Activated CD4-positive, alpha-beta T cell treated with anti-CD3 and anti-CD28 coated beads, Interleukin-2, amount 10 ng/mL, durations not matched to agents 24 days and 14 days (primary cell): ENCODE measurements at regions of chr7 and their contacts with region 1.

Region 1: DNA sequence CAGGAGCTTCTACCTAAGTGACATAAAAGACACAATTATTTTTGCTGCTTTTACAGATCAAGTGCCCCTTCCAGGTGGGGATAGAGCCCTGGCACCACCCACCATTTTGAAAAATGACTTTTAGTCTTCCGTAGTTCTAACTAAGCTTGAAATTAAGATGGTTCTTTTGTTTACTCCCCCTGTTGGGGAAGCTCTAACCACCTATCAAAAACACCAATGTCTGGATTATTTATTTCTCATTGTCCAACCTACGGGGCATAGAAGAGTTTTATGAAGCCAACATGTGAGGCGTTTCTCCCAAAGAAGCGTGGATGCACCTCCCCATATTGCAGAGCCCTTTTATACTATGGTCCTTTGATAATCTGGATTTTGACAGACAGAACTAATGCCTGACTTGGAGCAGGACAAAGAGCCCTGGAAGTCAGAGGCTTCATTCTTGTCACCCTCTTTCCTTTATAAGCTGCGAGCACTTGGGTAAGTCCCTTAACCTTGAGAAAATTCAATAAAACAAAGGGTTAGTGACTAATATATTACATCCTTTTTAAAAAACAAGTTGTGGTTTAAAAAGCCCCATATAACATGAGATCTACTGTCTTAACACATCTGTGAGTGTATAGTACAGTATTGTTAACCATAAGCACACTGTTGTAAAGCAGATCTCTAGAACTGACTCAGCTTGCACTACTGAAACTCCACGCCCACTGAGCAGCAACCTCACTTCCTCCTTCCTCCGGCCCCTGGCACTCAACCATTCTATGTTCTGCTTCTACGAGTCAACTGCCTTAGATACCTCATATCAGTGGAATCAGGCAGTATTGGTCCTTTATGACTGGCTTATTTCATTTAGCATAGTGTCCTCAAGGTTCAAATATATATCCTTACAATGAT is 67.5 kb downstream of the ATXN7L1 start:
- DNase-seq: peak; percentile 93
- H3K4me3 Mint-ChIP-seq: peak overlapping the region; percentile 71
- H3K27ac Mint-ChIP-seq: peak overlapping the region; percentile 92
- H3K4me1 Mint-ChIP-seq: peaks cover 75% of the 10 kb centered on the region
- H3K27me3 Mint-ChIP-seq: peaks cover 2% of the 10 kb centered on the region

Region 2: DNA sequence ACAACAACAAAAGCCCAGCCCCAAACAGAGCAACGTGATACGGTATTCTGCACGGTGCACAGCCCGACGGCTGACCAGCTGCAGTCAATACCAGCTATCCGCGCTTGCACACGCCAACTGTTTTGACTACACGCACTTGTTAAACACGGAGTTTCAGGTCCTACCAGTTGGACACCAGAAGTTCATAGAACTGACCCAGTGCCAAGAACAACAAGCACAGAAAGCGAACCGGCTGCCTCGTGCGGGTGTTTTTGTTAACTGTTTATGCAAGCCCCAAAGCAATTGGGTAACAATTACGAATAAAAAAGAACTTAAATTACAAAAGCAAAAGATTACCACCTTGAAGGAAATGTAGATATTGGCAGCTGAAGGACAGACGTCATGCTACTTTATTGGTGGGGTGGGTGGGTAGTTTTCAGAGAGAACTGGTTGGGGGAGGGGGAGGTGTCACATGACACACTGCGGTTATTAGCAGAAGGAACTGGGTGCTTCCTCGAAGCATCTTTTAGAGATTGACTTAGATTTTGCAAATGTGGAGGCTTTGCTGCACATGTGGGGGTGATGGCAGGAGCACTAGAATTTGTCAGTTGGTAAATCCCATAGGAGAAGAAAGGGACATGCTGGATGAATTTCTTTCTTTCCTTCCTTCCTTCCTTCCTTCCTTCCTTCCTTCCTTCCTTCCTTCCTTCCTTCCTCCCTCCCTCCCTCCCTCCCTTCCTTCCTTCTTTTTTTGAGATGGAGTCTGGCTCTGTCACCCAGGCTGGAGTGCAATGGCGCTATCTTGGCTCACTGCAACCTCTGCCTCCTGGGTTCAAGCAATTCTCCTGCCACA is 117.0 kb before region 1 on chr7:
- intact Hi-C with region 1: loop called (anchors 1 kb)
- DNase-seq: peak; percentile 82
- H3K4me3 Mint-ChIP-seq: peak overlapping the region; percentile 87
- H3K27ac Mint-ChIP-seq: peak overlapping the region; percentile 88
- H3K4me1 Mint-ChIP-seq: peaks cover 34% of the 10 kb centered on the region
- H3K27me3 Mint-ChIP-seq: no peaks in the 10 kb centered on the region

Region 3: DNA sequence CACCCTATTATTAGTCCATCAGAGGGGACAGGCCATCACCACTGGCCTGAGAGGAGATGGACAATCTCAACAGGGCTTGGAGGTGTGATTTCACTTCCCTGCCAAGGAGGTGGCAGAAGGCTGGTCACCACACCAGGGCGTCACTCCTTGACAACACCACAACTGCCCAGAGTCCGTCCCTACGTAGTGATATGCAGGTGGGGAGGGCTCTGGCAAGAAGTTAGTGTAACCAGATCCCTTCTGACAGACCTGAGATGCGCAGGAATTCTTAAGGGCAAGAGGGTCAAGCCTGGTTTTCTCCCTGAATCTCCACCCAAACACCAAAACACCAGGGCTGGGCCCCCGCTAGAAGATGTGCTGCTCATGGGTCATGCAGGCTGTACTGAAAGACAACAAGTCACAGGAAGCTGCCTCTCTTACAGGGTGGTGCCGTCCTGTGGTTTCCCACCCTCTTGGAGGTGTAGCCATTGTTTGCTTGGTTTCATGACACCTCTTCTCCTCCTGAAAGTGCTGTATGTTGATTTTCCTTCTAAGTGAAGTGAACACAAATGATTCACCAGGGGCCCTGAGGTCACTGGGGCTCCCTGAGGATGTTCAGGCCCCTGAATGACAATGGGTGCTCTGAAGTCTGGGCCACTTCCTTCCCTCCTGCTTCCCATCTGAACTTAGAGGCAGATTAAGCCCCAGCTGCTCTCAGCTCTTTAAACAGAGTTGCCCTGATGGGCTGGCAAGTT is 40.3 kb after region 1 on chr7:
- intact Hi-C with region 1: loop called (anchors 1 kb)
- DNase-seq: peak; percentile 90
- H3K4me3 Mint-ChIP-seq: peak overlapping the region; percentile 23
- H3K27ac Mint-ChIP-seq: peak overlapping the region; percentile 59
- H3K4me1 Mint-ChIP-seq: peaks cover 44% of the 10 kb centered on the region
- H3K27me3 Mint-ChIP-seq: peaks cover 1% of the 10 kb centered on the region

Region 4: DNA sequence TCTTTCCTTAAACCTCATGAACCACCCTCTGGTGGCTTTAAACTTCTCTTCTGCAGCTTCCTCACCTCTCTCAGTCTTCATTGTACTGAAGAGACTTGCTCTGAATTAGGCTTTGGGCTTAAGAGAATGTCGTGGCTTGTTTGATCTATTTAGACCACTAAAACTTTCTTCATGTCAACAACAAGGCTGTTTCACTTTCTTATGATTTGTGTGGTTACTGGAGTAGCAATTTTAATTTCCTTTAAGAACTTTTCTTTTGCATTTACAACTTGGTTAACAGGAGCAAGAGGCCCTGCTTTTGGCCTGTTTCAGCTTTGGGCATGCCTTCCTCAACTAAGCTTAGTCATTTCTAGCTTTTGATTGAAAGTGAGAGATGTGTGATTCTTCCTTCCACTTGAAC is 116.0 kb after region 1 on chr7:
- intact Hi-C with region 1: loop called (anchors 1 kb)
- DNase-seq: peak; percentile 76
- H3K4me3 Mint-ChIP-seq: no peak overlapping the region
- H3K27ac Mint-ChIP-seq: peak overlapping the region; percentile 22
- H3K4me1 Mint-ChIP-seq: peaks cover 13% of the 10 kb centered on the region
- H3K27me3 Mint-ChIP-seq: peaks cover 26% of the 10 kb centered on the region

Region 5: GRCh38 chr7:106071356-106071998 is 262.5 kb after region 1 on chr7:
- intact Hi-C with region 1: loop called (anchors 5 kb)
- DNase-seq: peak; percentile 86
- H3K4me3 Mint-ChIP-seq: peak overlapping the region; percentile 79
- H3K27ac Mint-ChIP-seq: peak overlapping the region; percentile 97
- H3K4me1 Mint-ChIP-seq: peaks cover 39% of the 10 kb centered on the region
- H3K27me3 Mint-ChIP-seq: no peaks in the 10 kb centered on the region

Region 6: GRCh38 chr7:106485031-106485551 is 676.1 kb after region 1 on chr7:
- intact Hi-C with region 1: loop called (anchors 5 kb)
- DNase-seq: peak; percentile 55
- H3K4me3 Mint-ChIP-seq: peak overlapping the region; percentile 11
- H3K27ac Mint-ChIP-seq: peak overlapping the region; percentile 82
- H3K4me1 Mint-ChIP-seq: peaks cover 43% of the 10 kb centered on the region
- H3K27me3 Mint-ChIP-seq: no peaks in the 10 kb centered on the region